Dendritic cell treated with granulocyte-macrophage colony-stimulating factor and Interleukin-4, amounts not matched to agents 40 ng/mL and 50 ng/mL, for 4 days (primary cell): ENCODE measurements at regions of chr12 and their contacts with region 1.

Region 1: GRCh38 chr12:121443193-121443870 is 43.4 kb downstream of the RNF34 start:
- H3K4me3 Mint-ChIP-seq: no peak overlapping the region
- H3K27ac Mint-ChIP-seq: peak overlapping the region; percentile 20
- H3K4me1 Mint-ChIP-seq: peaks cover 16% of the 10 kb centered on the region
- H3K27me3 Mint-ChIP-seq: no peaks in the 10 kb centered on the region

Region 2: DNA sequence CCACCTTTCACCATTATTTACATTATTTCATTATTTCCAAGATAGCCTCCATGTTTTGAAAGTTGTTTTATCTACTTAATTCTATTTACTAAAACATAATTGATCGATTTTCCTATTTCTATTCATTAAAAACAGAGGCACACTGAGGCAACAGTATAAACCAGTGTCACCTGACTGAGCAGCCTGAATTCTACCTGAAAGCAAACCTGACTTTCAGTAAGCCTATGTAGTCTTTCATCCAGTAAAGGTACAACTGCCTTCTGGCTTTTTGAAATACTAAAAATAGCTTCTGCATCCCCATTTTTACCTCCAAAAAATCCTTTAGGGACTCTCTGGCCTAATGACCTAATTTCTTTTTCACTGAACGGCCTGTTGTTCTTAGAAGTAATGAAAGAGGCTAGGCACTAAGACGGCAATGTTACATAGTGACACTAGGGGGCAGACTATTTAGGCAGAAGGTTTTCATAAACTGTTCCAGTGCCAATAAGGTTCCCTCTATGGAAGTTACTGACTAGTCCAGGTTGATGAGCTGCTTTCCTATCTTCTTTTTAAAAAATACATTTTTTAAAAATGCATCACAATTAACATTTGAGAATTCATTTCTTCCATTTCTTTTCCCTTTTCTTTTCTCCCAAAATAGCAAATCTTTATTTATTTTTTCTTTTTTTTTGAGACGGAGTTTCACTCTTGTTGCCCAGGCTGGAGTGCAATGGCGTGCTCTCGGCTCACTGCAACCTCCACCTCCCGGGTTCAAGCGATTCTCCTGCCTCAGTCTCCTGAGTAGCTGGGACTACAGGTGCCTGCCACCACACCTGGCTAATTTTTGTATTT is 108.6 kb before region 1 on chr12:
- intact Hi-C with region 1: loop called (anchors 1 kb)
- H3K4me3 Mint-ChIP-seq: no peak overlapping the region
- H3K27ac Mint-ChIP-seq: no peak overlapping the region
- H3K4me1 Mint-ChIP-seq: peaks cover 5% of the 10 kb centered on the region
- H3K27me3 Mint-ChIP-seq: no peaks in the 10 kb centered on the region